Caco-2 (cell line): ENCODE measurements at regions of chr7 and their contacts with region 1.

Region 1: GRCh38 chr7:156092307-156092706 is 280.0 kb upstream of the SHH start:
- DNase-seq: peak in 1 of 2 experiments; percentile 9
- H3K4me3 ChIP-seq: no peak overlapping the region
- H3K4me3 Mint-ChIP-seq: no peak overlapping the region
- H3K27ac Mint-ChIP-seq: no peak overlapping the region
- H3K4me1 ChIP-seq: no peaks in the 10 kb centered on the region
- H3K4me1 Mint-ChIP-seq: no peaks in the 10 kb centered on the region
- H3K27me3 ChIP-seq: no peaks in the 10 kb centered on the region
- H3K27me3 Mint-ChIP-seq: no peaks in the 10 kb centered on the region
- CTCF ChIP-seq: no peak

Region 2: GRCh38 chr7:155836216-155837130 is 255.8 kb before region 1 on chr7:
- CTCF ChIA-PET with region 1: no interaction called
- POLR2A ChIA-PET with region 1: interaction called, 10 read pairs
- intact Hi-C with region 1: no loop called
- DNase-seq: peak in 1 of 2 experiments; percentile 21
- H3K4me3 ChIP-seq: no peak overlapping the region
- H3K4me3 Mint-ChIP-seq: no peak overlapping the region
- H3K27ac Mint-ChIP-seq: no peak overlapping the region
- H3K4me1 ChIP-seq: peaks cover 7% of the 10 kb centered on the region
- H3K4me1 Mint-ChIP-seq: peaks cover 7% of the 10 kb centered on the region
- H3K27me3 ChIP-seq: no peaks in the 10 kb centered on the region
- H3K27me3 Mint-ChIP-seq: no peaks in the 10 kb centered on the region
- CTCF ChIP-seq: no peak

Region 3: GRCh38 chr7:156160811-156161210 is 68.5 kb after region 1 on chr7:
- CTCF ChIA-PET with region 1: no interaction called
- POLR2A ChIA-PET with region 1: no interaction called
- intact Hi-C with region 1: no loop called
- DNase-seq: no peak
- H3K4me3 ChIP-seq: no peak overlapping the region
- H3K4me3 Mint-ChIP-seq: no peak overlapping the region
- H3K27ac Mint-ChIP-seq: no peak overlapping the region
- H3K4me1 ChIP-seq: no peaks in the 10 kb centered on the region
- H3K4me1 Mint-ChIP-seq: no peaks in the 10 kb centered on the region
- H3K27me3 ChIP-seq: no peaks in the 10 kb centered on the region
- H3K27me3 Mint-ChIP-seq: peaks cover 12% of the 10 kb centered on the region
- CTCF ChIP-seq: no peak